ENCODE measurements at regions of chr16 and their contacts with region 1.

Region 1: DNA sequence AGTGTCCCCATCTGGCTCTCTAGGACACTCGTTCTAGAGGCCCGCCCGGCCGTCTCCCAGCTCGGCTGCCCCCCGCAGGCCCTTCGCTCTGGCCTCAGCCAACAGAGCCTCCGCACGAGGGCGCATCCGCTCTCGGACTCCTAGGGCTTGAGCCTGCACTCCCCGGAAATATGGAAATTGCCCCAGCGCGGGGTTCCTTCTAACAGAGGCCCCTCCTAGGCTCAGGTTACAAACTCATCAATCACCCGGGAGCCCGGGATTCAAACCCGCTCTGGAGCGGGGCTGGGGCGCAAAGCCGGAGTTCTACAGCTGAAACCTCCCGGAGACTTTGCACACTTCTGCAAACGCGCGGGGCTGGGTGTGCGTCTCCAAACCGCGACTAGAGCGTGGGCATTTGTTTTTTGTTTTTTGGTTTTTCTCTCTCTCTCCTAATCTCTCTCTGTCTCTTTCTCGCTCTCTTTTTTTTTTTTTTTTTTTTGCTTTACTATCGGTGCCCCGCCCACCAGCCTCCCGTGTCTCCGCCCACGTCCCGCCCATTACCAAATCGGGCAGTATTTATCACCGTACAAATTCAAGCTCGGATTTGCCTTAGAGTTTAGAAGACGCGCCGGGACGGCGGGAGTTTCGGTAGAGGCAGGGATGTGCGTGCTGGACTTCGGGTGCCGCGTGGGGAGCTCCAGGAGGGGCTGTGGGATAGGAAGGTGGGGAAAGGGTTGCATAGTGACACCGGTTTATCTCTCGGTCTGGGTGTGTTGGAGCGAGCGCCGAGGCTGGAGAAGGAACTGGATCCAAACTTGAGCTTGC is 2.4 kb upstream of the FOXL1 start:
- DNase-seq: peak; percentile 89 to 94
- H3K4me3 ChIP-seq: peak overlapping the region; percentile 60 to 78
- H3K27ac ChIP-seq: peak overlapping the region; percentile 95 to 97
- H3K4me1 ChIP-seq: peaks cover 0 to 81% (median 61%) of the 10 kb centered on the region in 4 donors
- H3K27me3 ChIP-seq: no peaks in the 10 kb centered on the region
- CTCF ChIP-seq: peak; percentile 63 to 65

Region 2: GRCh38 chr16:85393674-85394483 is 1182.1 kb before region 1 on chr16:
- intact Hi-C with region 1: no loop called
- DNase-seq: peak; percentile 26 to 78
- H3K4me3 ChIP-seq: no peak overlapping the region
- H3K27ac ChIP-seq: peak overlapping the region; percentile 78 to 89
- H3K4me1 ChIP-seq: peaks cover 0 to 52% (median 46%) of the 10 kb centered on the region in 4 donors
- H3K27me3 ChIP-seq: no peaks in the 10 kb centered on the region
- CTCF ChIP-seq: peak; percentile 68 to 71

Region 3: GRCh38 chr16:86611525-86611855 is 35.5 kb after region 1 on chr16:
- intact Hi-C with region 1: loop called (anchors 5 kb)
- DNase-seq: peak; percentile 39 to 89
- H3K4me3 ChIP-seq: peak overlapping the region; percentile 14 to 39
- H3K27ac ChIP-seq: peak overlapping the region; percentile 84 to 89
- H3K4me1 ChIP-seq: peaks cover 9 to 76% (median 46%) of the 10 kb centered on the region in 4 donors
- H3K27me3 ChIP-seq: no peaks in the 10 kb centered on the region
- CTCF ChIP-seq: no peak

Region 4: GRCh38 chr16:86680162-86680561 is 104.2 kb after region 1 on chr16:
- intact Hi-C with region 1: loop called (anchors 2 kb)
- DNase-seq: peak in 1 of 2 donors; percentile 57
- H3K4me3 ChIP-seq: peak overlapping the region in 1 of 2 donors; percentile 46
- H3K27ac ChIP-seq: peak overlapping the region; percentile 89
- H3K4me1 ChIP-seq: peaks cover 0 to 54% (median 35%) of the 10 kb centered on the region in 4 donors
- H3K27me3 ChIP-seq: no peaks in the 10 kb centered on the region
- CTCF ChIP-seq: peak in 1 of 2 experiments; percentile 14

Region 5: GRCh38 chr16:86755571-86756006 is 179.6 kb after region 1 on chr16:
- intact Hi-C with region 1: loop called (anchors 5 kb)
- DNase-seq: peak in 1 of 2 donors; percentile 66
- H3K4me3 ChIP-seq: no peak overlapping the region
- H3K27ac ChIP-seq: peak overlapping the region; percentile 4 to 55
- H3K4me1 ChIP-seq: peaks cover 6 to 43% (median 24%) of the 10 kb centered on the region in 4 donors
- H3K27me3 ChIP-seq: no peaks in the 10 kb centered on the region
- CTCF ChIP-seq: no peak

Region 6: GRCh38 chr16:86819533-86819892 is 243.6 kb after region 1 on chr16:
- intact Hi-C with region 1: no loop called
- DNase-seq: no peak
- H3K4me3 ChIP-seq: no peak overlapping the region
- H3K27ac ChIP-seq: no peak overlapping the region
- H3K4me1 ChIP-seq: peaks cover 0 to 22% (median 3%) of the 10 kb centered on the region in 4 donors
- H3K27me3 ChIP-seq: no peaks in the 10 kb centered on the region
- CTCF ChIP-seq: no peak